HepG2 (cell line): ENCODE measurements at regions of chr6 and their contacts with region 1.

Region 1: GRCh38 chr6:29589423-29590048 is 4.6 kb downstream of the OR2H2 start:
- DNase-seq: peak; percentile 40
- ATAC-seq: peak; percentile 84
- H3K4me3 ChIP-seq: no peak overlapping the region
- H3K27ac ChIP-seq: no peak overlapping the region
- H3K4me1 ChIP-seq: no peaks in the 10 kb centered on the region
- H3K27me3 ChIP-seq: peaks cover 0 to 7% of the 10 kb centered on the region in 2 experiments; a peak in 2 of 5 replicates
- CTCF ChIP-seq: peak; percentile 97
- EP300 ChIP-seq: no peak
- POLR2A ChIP-seq: no peak
- RAD21 ChIP-seq: peak; percentile 79

Region 2: DNA sequence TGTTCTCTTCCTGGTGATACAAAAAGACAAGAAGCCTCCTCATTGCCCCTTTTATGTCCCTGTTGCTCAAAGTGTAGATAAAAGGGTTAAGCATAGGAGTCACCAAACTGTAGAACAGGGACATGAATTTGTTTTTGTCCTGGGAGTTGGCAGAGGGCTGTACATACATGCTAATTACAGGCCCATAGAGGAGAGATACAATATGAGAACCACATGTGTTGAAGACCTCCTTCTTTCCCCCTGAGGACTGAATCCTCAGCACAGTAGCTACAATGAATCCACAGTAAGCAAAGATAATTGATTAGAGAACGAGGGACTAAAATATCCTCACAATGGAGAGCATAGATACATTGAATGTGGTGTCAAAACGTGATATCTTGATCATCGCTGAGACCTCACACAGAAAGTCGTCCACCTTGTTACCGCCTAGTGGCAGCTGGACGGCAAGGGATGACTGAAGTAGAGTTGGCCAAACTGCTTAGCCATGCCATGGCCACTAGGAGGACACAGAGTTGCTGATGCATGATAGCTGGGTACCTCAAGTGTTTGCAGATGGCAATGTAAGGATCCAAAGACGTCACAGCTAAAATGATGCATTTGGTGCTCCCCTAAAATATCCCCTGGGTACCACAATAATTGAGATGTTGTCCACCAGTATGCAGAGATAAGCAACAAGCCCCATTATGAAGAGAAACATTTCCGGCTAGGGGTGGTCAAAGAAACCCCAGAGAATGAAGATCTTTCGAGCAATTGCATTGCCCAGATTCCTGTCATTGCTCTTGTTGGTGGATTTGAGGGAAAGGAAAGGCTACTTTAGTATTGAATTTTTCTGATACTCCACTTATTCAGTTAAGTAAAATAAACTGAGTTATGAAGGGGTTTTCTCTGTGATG is 517.5 kb before region 1 on chr6:
- CTCF ChIA-PET with region 1: interaction called, 10 read pairs
- POLR2A ChIA-PET with region 1: no interaction called
- in situ Hi-C with region 1: loop called (anchors 25 kb)
- intact Hi-C with region 1: loop called (anchors 1 kb)
- DNase-seq: peak; percentile 61
- ATAC-seq: peak; percentile 100
- H3K4me3 ChIP-seq: no peak overlapping the region
- H3K27ac ChIP-seq: no peak overlapping the region
- H3K4me1 ChIP-seq: no peaks in the 10 kb centered on the region
- H3K27me3 ChIP-seq: no peaks in the 10 kb centered on the region
- CTCF ChIP-seq: peak; percentile 86
- EP300 ChIP-seq: no peak
- POLR2A ChIP-seq: no peak
- RAD21 ChIP-seq: peak; percentile 27; the same call in 1 of the 2 replicates

Region 3: DNA sequence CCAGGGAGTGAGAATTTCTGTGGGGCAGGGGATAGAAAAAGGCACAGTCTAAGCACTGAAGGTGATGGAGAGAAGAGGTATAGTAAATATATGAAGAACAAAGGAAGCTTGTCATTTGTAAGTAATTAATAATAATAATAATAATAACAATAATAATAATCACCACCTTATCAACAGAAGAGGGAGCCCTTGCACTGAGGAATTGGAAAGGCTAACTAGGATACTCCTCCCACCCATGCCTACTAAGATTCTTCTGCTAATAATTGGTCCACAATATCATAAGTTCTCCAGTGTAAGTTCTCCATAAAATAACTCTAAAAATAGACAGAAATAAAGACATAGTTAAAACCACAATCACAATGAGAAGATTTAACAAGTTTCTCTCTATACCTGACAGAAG is 213.5 kb before region 1 on chr6:
- CTCF ChIA-PET with region 1: interaction called, 20 read pairs
- POLR2A ChIA-PET with region 1: no interaction called
- in situ Hi-C with region 1: no loop called
- intact Hi-C with region 1: loop called (anchors 1 kb)
- DNase-seq: peak; percentile 4
- ATAC-seq: no peak
- H3K4me3 ChIP-seq: no peak overlapping the region
- H3K27ac ChIP-seq: no peak overlapping the region
- H3K4me1 ChIP-seq: no peaks in the 10 kb centered on the region
- H3K27me3 ChIP-seq: no peaks in the 10 kb centered on the region
- CTCF ChIP-seq: 0 out of 2 replicates have a peak, but pooled peaks have one; percentile 15
- EP300 ChIP-seq: no peak
- POLR2A ChIP-seq: no peak
- RAD21 ChIP-seq: no peak

Region 4: GRCh38 chr6:29414588-29414987 is 174.9 kb before region 1 on chr6 and contains the start of gene OR12D1:
- CTCF ChIA-PET with region 1: no interaction called
- POLR2A ChIA-PET with region 1: no interaction called
- in situ Hi-C with region 1: no loop called
- intact Hi-C with region 1: loop called (anchors 1 kb)
- DNase-seq: peak; percentile 10
- ATAC-seq: no peak
- H3K4me3 ChIP-seq: no peak within 1 kb of the TSS
- H3K27ac ChIP-seq: no peak within 1 kb of the TSS
- H3K4me1 ChIP-seq: no peaks in the 10 kb centered on the region
- H3K27me3 ChIP-seq: no peaks in the 10 kb centered on the region
- CTCF ChIP-seq: peak; percentile 24; the same call in 1 of the 2 replicates
- EP300 ChIP-seq: no peak
- POLR2A ChIP-seq: no peak
- RAD21 ChIP-seq: no peak
- total RNA-seq, gene OR12D1: not detected in 2 replicates

Region 5: GRCh38 chr6:29426655-29427054 is 162.9 kb before region 1 on chr6:
- CTCF ChIA-PET with region 1: interaction called, 3 read pairs
- POLR2A ChIA-PET with region 1: no interaction called
- in situ Hi-C with region 1: no loop called
- intact Hi-C with region 1: loop called (anchors 1 kb)
- DNase-seq: peak; percentile 34
- ATAC-seq: peak; percentile 87
- H3K4me3 ChIP-seq: no peak overlapping the region
- H3K27ac ChIP-seq: no peak overlapping the region
- H3K4me1 ChIP-seq: no peaks in the 10 kb centered on the region
- H3K27me3 ChIP-seq: no peaks in the 10 kb centered on the region
- CTCF ChIP-seq: peak; percentile 36; the same call in 1 of the 2 replicates
- EP300 ChIP-seq: no peak
- POLR2A ChIP-seq: no peak
- RAD21 ChIP-seq: no peak